ENCODE measurements at regions of chr6 and their contacts with region 1.

Region 1: DNA sequence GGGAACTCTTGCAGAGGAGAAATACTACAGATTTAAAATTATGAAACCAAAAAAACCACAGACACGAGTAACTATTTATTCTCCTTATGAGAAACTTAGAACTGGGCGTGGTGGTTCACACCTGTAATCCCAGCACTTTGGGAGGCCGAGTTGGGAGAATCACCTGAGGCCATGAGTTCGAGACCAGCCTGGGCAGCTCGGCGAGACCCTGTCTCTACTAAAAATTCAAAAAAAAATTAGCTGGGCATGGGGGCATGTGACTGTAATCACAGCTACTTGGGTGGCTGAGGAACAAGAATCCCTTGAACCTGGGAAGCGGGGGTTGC is 36.8 kb downstream of the SSR1 start:
- DNase-seq: no peak
- H3K4me3 Mint-ChIP-seq: no peak overlapping the region
- H3K27ac Mint-ChIP-seq: no peak overlapping the region
- H3K4me1 Mint-ChIP-seq: peaks cover 9% of the 10 kb centered on the region
- H3K27me3 Mint-ChIP-seq: peaks cover 2% of the 10 kb centered on the region

Region 2: DNA sequence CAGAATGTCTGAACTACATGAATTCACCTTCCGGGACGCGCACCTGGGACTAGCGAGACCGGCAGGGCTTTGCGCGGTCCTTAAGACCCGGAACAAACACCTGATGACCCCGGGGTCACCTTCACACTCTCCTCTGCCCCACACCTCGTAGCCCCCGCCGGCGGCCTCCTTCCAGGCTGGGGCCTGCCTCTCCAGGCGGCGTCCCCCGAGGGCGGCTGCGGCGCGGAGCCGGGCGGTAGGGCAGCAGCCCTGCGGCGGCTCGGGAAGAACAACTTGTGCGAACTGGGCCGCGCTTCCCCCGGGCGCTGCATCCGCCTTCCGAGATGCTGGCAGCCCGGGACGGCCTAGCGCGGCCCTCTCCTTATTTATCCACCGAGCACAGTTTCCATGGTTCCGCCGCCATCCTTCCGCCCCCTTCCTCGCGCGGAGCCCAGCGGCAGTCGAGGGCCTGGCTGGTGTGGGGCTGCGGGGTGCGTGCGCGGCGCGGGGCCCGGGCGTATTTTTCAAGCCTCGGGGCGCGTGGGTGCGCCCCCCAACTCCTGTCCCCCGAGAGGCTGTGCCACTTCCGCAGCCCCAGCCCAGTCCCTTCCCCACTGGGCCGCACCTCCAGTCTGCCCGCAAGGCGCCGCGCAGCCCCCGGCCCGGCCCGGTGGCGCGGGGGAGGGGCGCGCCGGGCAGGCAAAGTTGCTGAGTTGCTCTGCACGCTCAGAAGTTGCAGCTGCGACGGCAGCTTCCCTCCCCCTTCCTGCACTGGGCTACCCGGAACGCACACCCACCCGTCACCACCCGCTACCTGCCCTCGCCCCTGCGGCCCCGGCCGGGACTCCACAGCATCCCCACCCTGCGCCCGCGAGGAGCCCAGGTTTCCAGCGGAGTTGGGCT is 224.7 kb before region 1 on chr6:
- CTCF ChIA-PET with region 1: no interaction called
- POLR2A ChIA-PET with region 1: no interaction called
- intact Hi-C with region 1: no loop called
- DNase-seq: peak; percentile 59
- H3K4me3 Mint-ChIP-seq: peak overlapping the region; percentile 46
- H3K27ac Mint-ChIP-seq: no peak overlapping the region
- H3K4me1 Mint-ChIP-seq: peaks cover 13% of the 10 kb centered on the region
- H3K27me3 Mint-ChIP-seq: peaks cover 9% of the 10 kb centered on the region

Region 3: DNA sequence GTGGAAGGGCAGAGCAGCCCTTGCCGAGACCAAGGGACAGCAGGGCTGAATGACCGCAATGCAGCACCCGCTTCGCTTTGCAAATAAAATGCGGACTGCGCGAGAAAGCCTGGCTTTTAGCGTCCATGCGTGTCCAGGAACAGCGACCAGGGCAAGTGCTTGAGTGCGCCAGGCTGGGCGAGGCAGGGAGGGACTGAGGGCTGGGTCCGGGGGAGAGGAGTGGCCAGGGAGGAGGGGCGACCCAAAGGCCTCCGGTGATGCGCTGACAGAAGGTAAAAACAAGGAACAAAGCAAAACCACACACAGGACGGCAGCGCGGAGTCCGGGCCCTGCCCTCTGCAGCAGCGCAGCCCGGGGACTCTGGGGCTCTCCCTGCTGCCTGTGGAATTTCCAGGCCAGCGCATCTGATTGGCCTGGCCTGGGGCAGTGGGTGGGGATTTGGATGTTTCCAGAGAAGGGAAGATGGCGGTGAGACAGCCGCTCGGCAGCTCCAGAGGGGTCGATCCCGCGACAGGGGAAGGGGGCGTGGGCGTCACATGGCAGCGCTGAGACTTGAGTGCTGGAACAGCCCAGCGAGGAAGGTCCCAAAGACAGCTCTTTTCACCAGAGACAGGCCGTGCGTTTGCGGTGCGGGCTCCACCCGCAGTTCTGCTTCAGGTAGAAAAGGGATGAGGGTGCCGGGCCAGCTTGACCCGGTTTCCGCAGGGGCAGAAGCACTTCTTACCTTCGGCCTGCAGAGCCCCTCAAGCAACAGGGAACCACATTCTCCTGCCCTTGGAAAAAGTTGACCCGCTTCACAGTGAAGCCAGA is 14.9 kb before region 1 on chr6:
- CTCF ChIA-PET with region 1: interaction called, 12 read pairs
- POLR2A ChIA-PET with region 1: no interaction called
- intact Hi-C with region 1: no loop called
- DNase-seq: peak; percentile 75
- H3K4me3 Mint-ChIP-seq: peak overlapping the region; percentile 84
- H3K27ac Mint-ChIP-seq: no peak overlapping the region
- H3K4me1 Mint-ChIP-seq: peaks cover 16% of the 10 kb centered on the region
- H3K27me3 Mint-ChIP-seq: peaks cover 17% of the 10 kb centered on the region

Region 4: GRCh38 chr6:7446619-7447325 is 170.6 kb after region 1 on chr6:
- CTCF ChIA-PET with region 1: no interaction called
- POLR2A ChIA-PET with region 1: no interaction called
- intact Hi-C with region 1: no loop called
- DNase-seq: no peak
- H3K4me3 Mint-ChIP-seq: no peak overlapping the region
- H3K27ac Mint-ChIP-seq: no peak overlapping the region
- H3K4me1 Mint-ChIP-seq: no peaks in the 10 kb centered on the region
- H3K27me3 Mint-ChIP-seq: peaks cover 1% of the 10 kb centered on the region

Region 5: GRCh38 chr6:7615611-7616383 is 339.6 kb after region 1 on chr6:
- CTCF ChIA-PET with region 1: interaction called, 62 read pairs
- POLR2A ChIA-PET with region 1: no interaction called
- intact Hi-C with region 1: loop called (anchors 1 kb)
- DNase-seq: peak; percentile 35
- H3K4me3 Mint-ChIP-seq: no peak overlapping the region
- H3K27ac Mint-ChIP-seq: no peak overlapping the region
- H3K4me1 Mint-ChIP-seq: peaks cover 16% of the 10 kb centered on the region
- H3K27me3 Mint-ChIP-seq: peaks cover 4% of the 10 kb centered on the region